CD4-positive, alpha-beta memory T cell (primary cell): ENCODE measurements at regions of chr5 and their contacts with region 1.

Region 1: GRCh38 chr5:119315516-119315949 is 40.3 kb upstream of the TNFAIP8 start:
- DNase-seq: peak; percentile 64 to 78 (median 70)
- H3K4me3 ChIP-seq: no peak overlapping the region
- H3K4me3 Mint-ChIP-seq: peak overlapping the region; percentile 52 to 75 (median 68)
- H3K27ac ChIP-seq: peak overlapping the region; percentile 41
- H3K27ac Mint-ChIP-seq: peak overlapping the region; percentile 90 to 99 (median 92)
- H3K4me1 ChIP-seq: peaks cover 96% of the 10 kb centered on the region
- H3K4me1 Mint-ChIP-seq: peaks cover 79 to 96% (median 87%) of the 10 kb centered on the region in 4 donors
- H3K27me3 ChIP-seq: no peaks in the 10 kb centered on the region
- H3K27me3 Mint-ChIP-seq: no peaks in the 10 kb centered on the region

Region 2: GRCh38 chr5:119070828-119071572 is 244.5 kb before region 1 on chr5 and contains the start of gene DMXL1:
- CTCF ChIA-PET with region 1: interaction called, 5 read pairs
- POLR2A ChIA-PET with region 1: interaction called, 11 read pairs
- intact Hi-C with region 1: no loop called
- DNase-seq: peak; percentile 97 to 99 (median 98)
- H3K4me3 ChIP-seq: peak within 1 kb of the TSS; percentile 63 to 95
- H3K4me3 Mint-ChIP-seq: peak within 1 kb of the TSS; percentile 92 to 99 (median 99)
- H3K27ac ChIP-seq: peak within 1 kb of the TSS; percentile 86
- H3K27ac Mint-ChIP-seq: peak within 1 kb of the TSS; percentile 99 to 100 (median 99)
- H3K4me1 ChIP-seq: peaks cover 48% of the 10 kb centered on the region
- H3K4me1 Mint-ChIP-seq: peaks cover 21 to 46% (median 29%) of the 10 kb centered on the region in 4 donors
- H3K27me3 ChIP-seq: no peaks in the 10 kb centered on the region
- H3K27me3 Mint-ChIP-seq: peaks cover 0 to 2% of the 10 kb centered on the region in 2 donors
- total RNA-seq, gene DMXL1: 33.2 to 37.9 TPM

Region 3: GRCh38 chr5:119280380-119280779 is 35.2 kb before region 1 on chr5:
- CTCF ChIA-PET with region 1: interaction called, 10 read pairs
- POLR2A ChIA-PET with region 1: interaction called, 151 read pairs
- intact Hi-C with region 1: no loop called
- DNase-seq: no peak
- H3K4me3 ChIP-seq: no peak overlapping the region
- H3K4me3 Mint-ChIP-seq: peak overlapping the region in 7 of 8 donors; percentile 30 to 92 (median 74)
- H3K27ac ChIP-seq: peak overlapping the region; percentile 25
- H3K27ac Mint-ChIP-seq: peak overlapping the region; percentile 1 to 99 (median 58)
- H3K4me1 ChIP-seq: peaks cover 99% of the 10 kb centered on the region
- H3K4me1 Mint-ChIP-seq: peaks cover 83 to 100% (median 93%) of the 10 kb centered on the region in 4 donors
- H3K27me3 ChIP-seq: no peaks in the 10 kb centered on the region
- H3K27me3 Mint-ChIP-seq: peaks cover 0 to 2% of the 10 kb centered on the region in 2 donors

Region 4: GRCh38 chr5:119328753-119329602 is 13.4 kb after region 1 on chr5:
- CTCF ChIA-PET with region 1: interaction called, 149 read pairs
- POLR2A ChIA-PET with region 1: interaction called, 564 read pairs
- intact Hi-C with region 1: loop called (anchors 1 kb)
- DNase-seq: peak; percentile 56 to 89 (median 63)
- H3K4me3 ChIP-seq: peak overlapping the region; percentile 24 to 39
- H3K4me3 Mint-ChIP-seq: peak overlapping the region; percentile 70 to 89 (median 79)
- H3K27ac ChIP-seq: peak overlapping the region; percentile 75
- H3K27ac Mint-ChIP-seq: peak overlapping the region; percentile 93 to 97 (median 96)
- H3K4me1 ChIP-seq: peaks cover 91% of the 10 kb centered on the region
- H3K4me1 Mint-ChIP-seq: peaks cover 68 to 92% (median 78%) of the 10 kb centered on the region in 4 donors
- H3K27me3 ChIP-seq: no peaks in the 10 kb centered on the region
- H3K27me3 Mint-ChIP-seq: no peaks in the 10 kb centered on the region

Region 5: DNA sequence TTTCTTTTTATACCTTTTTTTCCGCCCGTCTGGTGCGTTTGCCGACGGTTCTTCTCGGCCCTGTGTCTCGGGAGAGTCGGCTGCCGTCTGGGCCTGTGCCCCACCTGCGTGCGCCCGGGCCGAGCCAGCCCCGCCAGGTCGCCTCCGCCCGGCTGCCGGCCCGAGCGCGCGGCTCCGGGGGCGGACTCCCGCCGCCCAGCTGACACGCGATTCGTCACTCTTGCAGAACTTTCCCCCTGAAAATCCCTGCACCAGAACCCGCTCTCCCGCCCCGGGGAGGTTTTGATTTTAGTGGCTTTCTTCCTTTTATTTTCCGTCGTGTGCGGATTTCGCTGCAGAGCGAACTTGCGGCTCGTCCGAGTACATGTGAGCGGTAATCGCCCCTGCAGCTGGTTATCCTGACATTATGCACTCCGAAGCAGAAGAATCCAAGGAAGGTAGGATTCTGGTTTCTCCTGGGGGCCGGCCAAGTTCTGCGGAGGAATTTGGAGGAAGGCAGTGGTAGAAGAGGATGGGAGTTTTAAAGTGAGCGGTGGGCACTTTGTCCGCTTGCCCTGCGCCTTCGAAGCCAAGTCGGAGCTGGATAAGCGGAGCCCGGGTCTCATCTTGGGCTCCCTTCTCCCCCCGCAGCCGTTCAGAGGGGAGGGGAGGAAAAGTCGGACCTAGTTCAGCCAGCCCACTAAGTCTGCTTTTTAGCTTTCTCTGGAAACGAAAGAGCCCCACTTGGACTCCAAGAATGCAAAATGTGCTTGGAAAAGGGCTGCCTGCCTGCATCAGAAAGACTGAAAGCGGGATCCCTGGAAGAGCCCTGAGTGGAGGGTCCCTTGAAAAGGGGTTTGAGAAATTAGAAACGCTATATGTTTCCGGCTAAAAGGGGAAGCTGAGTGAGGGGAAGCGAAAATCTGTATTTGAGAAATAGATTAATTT is 40.4 kb after region 1 on chr5 and contains the start of gene TNFAIP8:
- CTCF ChIA-PET with region 1: interaction called, 30 read pairs
- POLR2A ChIA-PET with region 1: interaction called, 7 read pairs
- intact Hi-C with region 1: loop called (anchors 2 kb)
- DNase-seq: peak in 2 of 5 donors; percentile 12 to 75
- H3K4me3 ChIP-seq: peak within 1 kb of the TSS; percentile 51 to 55
- H3K4me3 Mint-ChIP-seq: peak within 1 kb of the TSS; percentile 82 to 97 (median 90)
- H3K27ac ChIP-seq: peak within 1 kb of the TSS; percentile 78
- H3K27ac Mint-ChIP-seq: peak within 1 kb of the TSS; percentile 86 to 97 (median 93)
- H3K4me1 ChIP-seq: peaks cover 93% of the 10 kb centered on the region
- H3K4me1 Mint-ChIP-seq: peaks cover 75 to 95% (median 86%) of the 10 kb centered on the region in 4 donors
- H3K27me3 ChIP-seq: no peaks in the 10 kb centered on the region
- H3K27me3 Mint-ChIP-seq: no peaks in the 10 kb centered on the region
- total RNA-seq, gene TNFAIP8: 167 to 176 TPM

Region 6: DNA sequence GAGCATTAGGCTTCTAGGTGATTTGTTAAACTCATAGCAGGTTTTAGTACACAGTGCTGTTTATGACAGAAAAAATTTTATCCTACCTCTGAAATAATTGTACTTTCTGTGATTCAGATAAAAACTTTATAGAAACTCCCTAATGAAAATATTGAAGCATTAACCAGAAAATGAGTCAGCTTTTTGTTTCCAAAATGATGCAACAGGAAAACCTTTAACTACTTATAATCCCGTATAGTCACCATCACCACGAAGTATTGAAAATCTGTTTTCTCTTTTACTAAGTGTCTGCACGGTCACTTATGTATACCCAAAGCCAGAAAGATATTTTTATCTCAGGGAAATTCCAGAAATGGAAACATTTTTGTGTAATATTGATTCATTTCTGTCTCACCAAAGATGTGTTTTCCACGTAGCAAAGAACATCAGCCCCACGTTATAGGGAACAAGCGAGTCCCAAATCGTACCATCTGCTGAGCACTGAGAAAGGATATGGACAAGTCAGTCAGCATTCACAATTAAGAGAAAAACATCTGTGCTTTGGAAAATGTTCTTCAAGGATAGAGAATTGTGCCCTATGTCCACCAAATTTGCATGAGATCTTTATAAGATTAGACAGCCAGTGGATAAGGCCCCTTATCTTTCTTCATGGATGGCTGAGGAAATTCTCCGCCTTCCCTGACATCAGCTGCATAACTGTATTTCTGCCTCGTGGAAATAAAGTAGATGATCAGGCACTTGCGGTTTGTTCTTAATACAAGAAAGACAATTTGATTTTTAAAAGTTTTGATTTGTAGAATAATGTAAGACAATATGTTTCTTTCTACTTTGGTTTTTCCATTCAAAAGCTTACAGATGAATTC is 82.2 kb after region 1 on chr5:
- CTCF ChIA-PET with region 1: interaction called, 17 read pairs
- POLR2A ChIA-PET with region 1: interaction called, 3 read pairs
- intact Hi-C with region 1: no loop called
- DNase-seq: peak in 1 of 5 donors; percentile 48
- H3K4me3 ChIP-seq: no peak overlapping the region
- H3K4me3 Mint-ChIP-seq: peak overlapping the region in 4 of 8 donors; percentile 3 to 76 (median 19)
- H3K27ac ChIP-seq: no peak overlapping the region
- H3K27ac Mint-ChIP-seq: peak overlapping the region; percentile 15 to 91 (median 69)
- H3K4me1 ChIP-seq: peaks cover 49% of the 10 kb centered on the region
- H3K4me1 Mint-ChIP-seq: peaks cover 46 to 62% (median 54%) of the 10 kb centered on the region in 4 donors
- H3K27me3 ChIP-seq: no peaks in the 10 kb centered on the region
- H3K27me3 Mint-ChIP-seq: no peaks in the 10 kb centered on the region